Endothelial cell of umbilical vein (primary cell): ENCODE measurements at regions of chr6 and their contacts with region 1.

Region 1: DNA sequence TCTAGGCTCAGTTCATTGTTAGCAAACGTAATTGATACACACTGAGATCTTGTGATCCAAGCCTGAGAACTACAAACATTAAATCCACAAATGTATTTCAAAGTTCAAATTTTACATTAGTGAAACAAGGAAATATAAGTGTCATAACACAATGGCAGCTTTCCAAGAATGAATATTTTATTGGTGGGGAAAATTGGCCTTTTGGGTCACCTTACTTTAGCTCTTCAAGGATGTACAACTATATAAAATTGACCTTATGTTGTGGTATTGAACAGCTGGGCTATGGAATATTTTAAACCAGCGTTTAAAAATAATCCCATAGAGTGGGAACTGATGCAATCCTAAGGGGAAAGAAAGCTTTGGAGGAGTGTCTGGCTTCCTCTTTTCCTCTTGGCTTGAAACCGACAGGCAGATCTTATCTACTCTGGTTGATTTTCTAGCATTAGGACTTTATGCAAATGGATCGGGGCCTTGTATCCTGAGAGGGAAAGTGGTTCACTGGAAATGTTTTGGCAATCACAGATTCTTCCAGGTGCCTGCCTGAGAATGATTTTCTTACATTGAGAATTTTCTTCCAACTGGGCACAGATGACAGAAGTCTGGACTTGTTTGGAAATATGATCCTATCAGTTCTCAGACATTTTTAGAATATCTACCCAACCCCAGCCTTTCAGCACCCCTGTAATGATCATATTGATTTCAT is 184.8 kb upstream of the ECI2 start:
- DNase-seq: peak; percentile 84
- H3K4me3 ChIP-seq: no peak overlapping the region
- H3K27ac ChIP-seq: peak overlapping the region; percentile 38
- H3K4me1 ChIP-seq: peaks cover 30% of the 10 kb centered on the region
- H3K27me3 ChIP-seq: no peaks in the 10 kb centered on the region
- CTCF ChIP-seq: no peak
- POLR2A ChIP-seq: no peak

Region 2: GRCh38 chr6:4351520-4352315 is 31.6 kb after region 1 on chr6:
- CTCF ChIA-PET with region 1: interaction called, 4 read pairs
- POLR2A ChIA-PET with region 1: no interaction called
- dilution Hi-C with region 1: no loop called
- intact Hi-C with region 1: loop called (anchors 2 kb)
- DNase-seq: peak; percentile 69
- H3K4me3 ChIP-seq: no peak overlapping the region
- H3K27ac ChIP-seq: peak overlapping the region; percentile 35
- H3K4me1 ChIP-seq: peaks cover 24% of the 10 kb centered on the region
- H3K27me3 ChIP-seq: no peaks in the 10 kb centered on the region
- CTCF ChIP-seq: no peak
- POLR2A ChIP-seq: no peak

Region 3: GRCh38 chr6:4377603-4378002 is 57.5 kb after region 1 on chr6:
- CTCF ChIA-PET with region 1: no interaction called
- POLR2A ChIA-PET with region 1: no interaction called
- dilution Hi-C with region 1: no loop called
- intact Hi-C with region 1: no loop called
- DNase-seq: no peak
- H3K4me3 ChIP-seq: no peak overlapping the region
- H3K27ac ChIP-seq: no peak overlapping the region
- H3K4me1 ChIP-seq: peaks cover 15% of the 10 kb centered on the region
- H3K27me3 ChIP-seq: no peaks in the 10 kb centered on the region
- CTCF ChIP-seq: no peak
- POLR2A ChIP-seq: no peak

Region 4: GRCh38 chr6:4459052-4459451 is 138.9 kb after region 1 on chr6:
- CTCF ChIA-PET with region 1: no interaction called
- POLR2A ChIA-PET with region 1: no interaction called
- dilution Hi-C with region 1: no loop called
- intact Hi-C with region 1: loop called (anchors 2 kb)
- DNase-seq: peak; percentile 89
- H3K4me3 ChIP-seq: no peak overlapping the region
- H3K27ac ChIP-seq: peak overlapping the region; percentile 78
- H3K4me1 ChIP-seq: peaks cover 12% of the 10 kb centered on the region
- H3K27me3 ChIP-seq: no peaks in the 10 kb centered on the region
- CTCF ChIP-seq: no peak
- POLR2A ChIP-seq: no peak